Activated naive CD4-positive, alpha-beta T cell treated with anti-CD3 and anti-CD28 coated beads for 36 hours (primary cell): ENCODE measurements at regions of chr14 and their contacts with region 1.

Region 1: GRCh38 chr14:52729925-52730667 is at the start of gene STYX:
- DNase-seq: peak; percentile 98
- H3K4me3 Mint-ChIP-seq: peak within 1 kb of the TSS; percentile 84
- H3K27ac Mint-ChIP-seq: peak within 1 kb of the TSS; percentile 86
- H3K4me1 Mint-ChIP-seq: peaks cover 38% of the 10 kb centered on the region
- H3K27me3 Mint-ChIP-seq: no peaks in the 10 kb centered on the region
- total RNA-seq, gene STYX: 13.3 to 14.1 TPM

Region 2: GRCh38 chr14:52695481-52696091 is 34.5 kb before region 1 on chr14 and contains the start of gene ERO1A:
- CTCF ChIA-PET with region 1: no interaction called
- intact Hi-C with region 1: loop called (anchors 1 kb)
- DNase-seq: peak; percentile 72
- H3K4me3 Mint-ChIP-seq: peak within 1 kb of the TSS; percentile 99
- H3K27ac Mint-ChIP-seq: peak within 1 kb of the TSS; percentile 99
- H3K4me1 Mint-ChIP-seq: peaks cover 33% of the 10 kb centered on the region
- H3K27me3 Mint-ChIP-seq: no peaks in the 10 kb centered on the region
- total RNA-seq, gene ERO1A: 87.4 to 90.4 TPM

Region 3: DNA sequence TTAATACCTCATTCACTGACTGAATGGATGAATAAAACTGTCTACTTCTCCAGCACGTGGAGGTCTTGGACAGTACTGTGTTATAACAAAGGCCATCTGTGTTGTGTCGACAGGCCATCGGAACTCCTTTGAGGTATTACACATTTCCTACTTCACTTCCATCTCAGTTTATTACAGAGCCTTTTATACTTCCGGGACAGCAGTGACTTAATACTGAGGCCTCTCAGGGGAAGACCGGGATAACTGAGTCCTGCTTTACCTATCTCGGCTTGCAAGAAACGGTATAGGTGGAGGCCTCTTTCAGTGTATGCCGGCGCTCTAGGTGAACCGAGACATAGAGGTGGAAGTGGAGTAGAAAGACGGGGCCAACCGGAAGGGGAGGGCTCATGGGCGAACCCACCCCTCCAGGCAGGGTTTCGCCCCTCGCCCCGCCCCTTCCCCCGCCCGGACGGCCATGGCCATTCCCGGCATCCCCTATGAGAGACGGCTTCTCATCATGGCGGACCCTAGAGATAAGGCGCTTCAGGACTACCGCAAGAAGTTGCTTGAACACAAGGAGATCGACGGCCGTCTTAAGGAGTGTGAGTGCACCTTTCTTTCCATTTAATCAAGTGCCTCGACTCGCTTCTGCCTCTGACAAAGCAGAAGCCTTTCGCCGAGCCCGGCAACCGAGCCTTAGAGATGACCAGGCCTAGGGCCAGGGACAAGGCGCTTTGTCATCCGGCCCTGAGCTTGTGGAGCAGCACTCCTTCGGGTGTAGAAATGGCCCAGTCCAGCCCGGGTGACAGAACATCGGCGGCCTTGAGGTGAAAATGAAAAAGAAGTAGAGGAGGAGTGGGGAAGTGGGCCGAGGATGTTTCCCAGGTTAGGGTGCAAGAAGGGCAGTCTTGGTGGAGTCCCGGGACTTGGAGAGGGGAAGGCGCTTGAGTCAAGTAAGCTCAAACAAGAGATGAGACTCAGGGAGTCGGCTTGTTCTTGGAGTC is 23.1 kb before region 1 on chr14 and contains the start of gene PSMC6:
- CTCF ChIA-PET with region 1: interaction called, 3 read pairs
- intact Hi-C with region 1: loop called (anchors 1 kb)
- DNase-seq: peak; percentile 97
- H3K4me3 Mint-ChIP-seq: peak within 1 kb of the TSS; percentile 100
- H3K27ac Mint-ChIP-seq: peak within 1 kb of the TSS; percentile 97
- H3K4me1 Mint-ChIP-seq: peaks cover 47% of the 10 kb centered on the region
- H3K27me3 Mint-ChIP-seq: no peaks in the 10 kb centered on the region
- total RNA-seq, gene PSMC6: 103 to 114 TPM